Heart right ventricle (tissue), 16 donors: ENCODE measurements at regions of chr2 and their contacts with region 1.

Region 1: DNA sequence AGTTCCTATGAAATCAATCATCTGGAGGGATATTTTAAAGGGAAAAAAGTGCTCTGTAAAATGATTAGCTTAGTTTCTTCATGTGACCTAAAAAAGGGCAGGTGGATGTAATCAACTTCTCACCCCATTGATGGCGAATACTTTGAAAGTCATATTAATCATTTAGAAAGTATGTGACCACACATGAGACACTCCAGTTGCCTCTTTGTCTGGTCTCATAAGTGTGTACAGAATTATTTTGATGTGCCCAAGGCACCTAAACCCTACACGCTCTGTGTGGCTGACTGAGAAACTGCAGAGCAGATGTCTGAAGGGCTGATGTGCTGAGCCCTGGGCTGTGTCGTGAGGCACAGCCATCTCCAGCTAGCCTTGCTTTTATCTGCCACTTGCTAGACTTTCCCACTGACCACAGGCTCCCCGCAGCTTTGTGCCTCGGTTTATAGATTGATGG is 26.9 kb downstream of the SGPP2 start:
- DNase-seq: no peak
- ATAC-seq: peak in 2 of 8 donors; percentile 46 to 47
- H3K4me3 ChIP-seq: no peak overlapping the region
- H3K27ac ChIP-seq: no peak overlapping the region
- H3K4me1 ChIP-seq: peaks cover 0 to 33% (median 10%) of the 10 kb centered on the region in 9 donors
- H3K27me3 ChIP-seq: no peaks in the 10 kb centered on the region
- CTCF ChIP-seq: no peak

Region 2: DNA sequence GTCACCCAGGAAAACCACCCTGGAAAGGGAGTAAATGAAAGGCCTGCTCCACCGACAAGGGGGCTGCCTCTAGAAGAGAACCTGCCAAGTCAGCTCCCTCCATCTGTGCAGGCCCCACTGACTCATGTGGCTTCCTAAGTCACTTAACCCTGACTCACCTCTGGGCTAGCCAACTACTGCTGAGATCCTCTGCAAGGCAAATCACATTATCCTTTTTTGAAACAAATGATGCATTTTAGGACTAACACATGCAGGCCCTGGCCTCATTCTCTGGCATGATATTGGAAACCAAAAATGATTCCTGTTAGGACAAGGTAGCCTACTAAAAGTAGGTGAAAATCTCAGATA is 1353.7 kb before region 1 on chr2:
- intact Hi-C with region 1: loop called in 1 of 10 experiments (anchors 10 kb)
- DNase-seq: no peak
- ATAC-seq: no peak
- H3K4me3 ChIP-seq: no peak overlapping the region
- H3K27ac ChIP-seq: no peak overlapping the region
- H3K4me1 ChIP-seq: peaks cover 0 to 5% (median 0%) of the 10 kb centered on the region in 9 donors
- H3K27me3 ChIP-seq: no peaks in the 10 kb centered on the region
- CTCF ChIP-seq: no peak